ENCODE measurements at regions of chr1 and their contacts with region 1.

Region 1: DNA sequence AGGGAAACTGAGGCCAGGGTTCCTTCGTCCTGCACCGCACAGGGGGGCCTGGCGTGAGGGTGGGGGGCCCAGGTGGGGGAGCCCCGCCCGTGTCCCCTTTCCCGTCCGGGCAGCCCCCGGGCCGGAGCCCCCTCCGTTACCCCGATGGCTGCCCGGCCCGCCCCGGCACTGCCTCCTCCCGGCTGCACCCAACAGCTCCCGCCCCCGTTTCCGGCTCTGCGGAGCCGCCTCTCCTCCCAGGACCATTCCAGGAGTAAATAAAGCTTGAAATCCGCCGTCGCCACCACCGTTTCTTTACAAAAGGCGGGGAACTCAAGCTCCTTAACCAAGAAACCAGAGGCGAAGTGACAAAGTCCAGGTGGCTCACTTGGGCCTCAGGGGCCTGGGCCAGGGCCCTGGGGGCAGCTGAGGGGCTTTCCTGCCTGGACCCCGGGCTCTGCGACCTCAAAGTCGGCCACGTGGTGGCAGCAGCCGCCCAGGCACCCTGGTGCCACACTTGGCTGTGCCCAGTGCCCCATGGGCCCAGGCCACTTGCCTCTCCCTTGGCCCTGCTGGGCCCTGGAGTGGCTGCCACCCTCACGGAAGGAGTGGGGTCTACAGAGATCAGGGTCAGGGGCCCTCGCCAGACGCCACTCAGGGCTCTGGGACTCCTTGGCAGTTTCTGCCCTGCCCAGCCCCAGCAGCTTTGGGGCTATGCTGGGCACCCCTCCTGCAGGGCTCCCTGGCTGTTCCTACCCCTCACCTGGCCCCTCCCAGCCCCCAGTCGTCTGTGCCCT is 514 bp upstream of the FAAP20 start:
- DNase-seq: peak; percentile 93
- ATAC-seq: peak; percentile 75
- H3K4me3 ChIP-seq: peak overlapping the region; percentile 46 to 81 (median 63)
- H3K4me3 Mint-ChIP-seq: peak overlapping the region; percentile 93
- H3K27ac ChIP-seq: peak overlapping the region; percentile 80 to 84
- H3K27ac Mint-ChIP-seq: peak overlapping the region; percentile 96
- H3K4me1 ChIP-seq: peaks cover 26 to 41% of the 10 kb centered on the region in 2 donors
- H3K4me1 Mint-ChIP-seq: peaks cover 24% of the 10 kb centered on the region
- H3K27me3 ChIP-seq: no peaks in the 10 kb centered on the region
- H3K27me3 Mint-ChIP-seq: no peaks in the 10 kb centered on the region
- CTCF ChIP-seq: peak; percentile 90

Region 2: GRCh38 chr1:2049718-2050427 is 145.2 kb before region 1 on chr1 and contains the start of gene PRKCZ:
- CTCF ChIA-PET with region 1: no interaction called
- POLR2A ChIA-PET with region 1: no interaction called
- intact Hi-C with region 1: no loop called
- DNase-seq: peak; percentile 95
- ATAC-seq: peak; percentile 97
- H3K4me3 ChIP-seq: peak within 1 kb of the TSS; percentile 12 to 90 (median 79)
- H3K4me3 Mint-ChIP-seq: peak within 1 kb of the TSS; percentile 81
- H3K27ac ChIP-seq: peak within 1 kb of the TSS; percentile 52 to 72
- H3K27ac Mint-ChIP-seq: peak within 1 kb of the TSS; percentile 75
- H3K4me1 ChIP-seq: peaks cover 22 to 33% of the 10 kb centered on the region in 2 donors
- H3K4me1 Mint-ChIP-seq: peaks cover 34% of the 10 kb centered on the region
- H3K27me3 ChIP-seq: peaks cover 0 to 36% (median 15%) of the 10 kb centered on the region in 4 experiments
- H3K27me3 Mint-ChIP-seq: peaks cover 9% of the 10 kb centered on the region
- CTCF ChIP-seq: no peak
- total RNA-seq, gene PRKCZ: 53.2 and 54.4 TPM in 2 replicates

Region 3: DNA sequence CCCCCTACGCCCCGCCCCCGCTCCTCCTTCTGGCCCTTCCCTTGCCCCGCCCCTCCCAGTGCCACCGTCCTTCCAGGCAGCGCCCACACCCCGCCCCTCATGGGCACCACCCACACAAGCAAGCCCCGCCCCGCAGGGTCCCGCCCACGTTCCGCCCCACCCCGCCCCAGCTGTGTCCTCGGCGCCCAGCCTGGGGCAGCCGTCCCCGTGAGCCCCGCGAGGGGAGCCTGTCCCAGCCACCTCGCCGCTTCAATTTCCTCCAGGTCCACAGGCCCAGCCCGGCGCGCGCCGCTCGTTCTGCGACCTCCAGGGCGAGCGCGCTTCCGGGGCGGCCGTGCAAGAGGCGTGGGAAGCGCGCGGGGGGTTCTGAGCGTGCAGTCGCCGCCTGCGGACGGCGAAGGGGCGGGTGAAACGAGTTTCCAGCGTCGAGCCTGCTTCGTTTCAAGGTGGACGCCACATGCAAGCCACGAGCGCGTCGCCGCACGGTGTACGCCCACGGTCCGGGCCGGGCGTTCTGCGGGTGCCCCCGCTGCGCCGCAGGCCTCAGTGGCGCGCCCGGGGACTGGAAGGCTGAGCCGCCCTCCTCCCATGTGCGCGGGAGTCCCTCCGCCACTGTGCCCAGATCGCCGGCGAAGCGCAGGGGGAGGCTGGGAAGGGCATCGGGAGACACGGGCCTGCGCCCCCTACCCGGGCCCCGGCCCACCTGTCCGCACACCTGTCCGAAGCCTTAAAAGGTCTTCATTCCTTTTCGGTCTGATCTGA is 10.3 kb after region 1 on chr1:
- CTCF ChIA-PET with region 1: interaction called, 18 read pairs
- POLR2A ChIA-PET with region 1: interaction called, 4 read pairs
- intact Hi-C with region 1: loop called (anchors 1 kb)
- DNase-seq: peak; percentile 95
- ATAC-seq: peak; percentile 93
- H3K4me3 ChIP-seq: peak overlapping the region in 4 of 5 experiments; percentile 46 to 70 (median 64)
- H3K4me3 Mint-ChIP-seq: peak overlapping the region; percentile 77
- H3K27ac ChIP-seq: peak overlapping the region in 1 of 2 donors; percentile 47
- H3K27ac Mint-ChIP-seq: peak overlapping the region; percentile 72
- H3K4me1 ChIP-seq: peaks cover 32 to 44% of the 10 kb centered on the region in 2 donors
- H3K4me1 Mint-ChIP-seq: peaks cover 30% of the 10 kb centered on the region
- H3K27me3 ChIP-seq: no peaks in the 10 kb centered on the region
- H3K27me3 Mint-ChIP-seq: no peaks in the 10 kb centered on the region
- CTCF ChIP-seq: no peak

Region 4: GRCh38 chr1:2215909-2216766 is 21.1 kb after region 1 on chr1:
- CTCF ChIA-PET with region 1: no interaction called
- POLR2A ChIA-PET with region 1: no interaction called
- intact Hi-C with region 1: no loop called
- DNase-seq: no peak
- ATAC-seq: no peak
- H3K4me3 ChIP-seq: no peak overlapping the region
- H3K4me3 Mint-ChIP-seq: no peak overlapping the region
- H3K27ac ChIP-seq: no peak overlapping the region
- H3K27ac Mint-ChIP-seq: no peak overlapping the region
- H3K4me1 ChIP-seq: peaks cover 10 to 16% of the 10 kb centered on the region in 2 donors
- H3K4me1 Mint-ChIP-seq: peaks cover 7% of the 10 kb centered on the region
- H3K27me3 ChIP-seq: peaks cover 0 to 12% (median 3%) of the 10 kb centered on the region in 4 experiments
- H3K27me3 Mint-ChIP-seq: no peaks in the 10 kb centered on the region
- CTCF ChIP-seq: no peak

Region 5: GRCh38 chr1:2314803-2315673 is 120.0 kb after region 1 on chr1:
- CTCF ChIA-PET with region 1: interaction called, 19 read pairs
- POLR2A ChIA-PET with region 1: interaction called, 5 read pairs
- intact Hi-C with region 1: no loop called
- DNase-seq: peak; percentile 81
- ATAC-seq: peak; percentile 59
- H3K4me3 ChIP-seq: peak overlapping the region in 4 of 5 experiments; percentile 51 to 71 (median 59)
- H3K4me3 Mint-ChIP-seq: peak overlapping the region; percentile 69
- H3K27ac ChIP-seq: peak overlapping the region; percentile 84 to 91
- H3K27ac Mint-ChIP-seq: peak overlapping the region; percentile 77
- H3K4me1 ChIP-seq: peaks cover 44 to 53% of the 10 kb centered on the region in 2 donors
- H3K4me1 Mint-ChIP-seq: peaks cover 35% of the 10 kb centered on the region
- H3K27me3 ChIP-seq: no peaks in the 10 kb centered on the region
- H3K27me3 Mint-ChIP-seq: no peaks in the 10 kb centered on the region
- CTCF ChIP-seq: peak; percentile 95

Region 6: DNA sequence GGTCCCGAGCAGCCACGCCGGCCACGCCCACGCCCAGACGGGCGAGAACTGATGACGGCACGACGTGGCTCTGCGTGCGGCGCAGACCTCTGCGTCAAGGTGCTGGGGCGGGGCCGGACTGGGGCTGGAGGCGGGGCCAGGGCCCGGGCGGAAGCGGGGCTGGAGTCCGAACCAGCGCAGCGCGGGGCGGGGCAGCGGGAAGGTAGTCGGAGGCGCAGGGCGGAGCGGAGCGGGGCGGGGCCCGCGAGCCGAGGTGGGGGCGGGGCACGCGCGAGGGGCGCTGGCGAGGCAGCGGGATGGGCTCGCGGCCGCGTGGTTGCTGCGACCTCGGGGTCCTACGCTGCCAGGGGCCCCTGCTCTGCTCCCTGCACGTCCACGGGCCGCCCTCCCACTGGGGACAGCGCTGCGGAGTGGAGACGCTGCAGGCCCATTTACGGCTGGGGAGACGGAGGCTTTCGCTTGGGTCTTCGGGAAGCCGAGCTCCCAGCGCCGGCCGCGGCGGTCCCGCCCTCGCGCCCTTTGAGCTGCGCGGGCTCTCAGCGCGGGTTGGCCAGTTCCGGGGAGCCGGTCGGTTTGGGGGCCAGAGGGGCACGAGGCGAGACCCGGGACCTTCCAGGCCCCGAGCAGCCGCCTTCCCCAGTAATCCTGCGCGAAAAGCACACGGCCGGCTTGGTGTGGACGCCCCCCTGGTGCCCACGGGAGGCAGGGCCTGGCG is 217.6 kb after region 1 on chr1 and contains the start of gene PEX10:
- CTCF ChIA-PET with region 1: interaction called, 11 read pairs
- POLR2A ChIA-PET with region 1: interaction called, 4 read pairs
- intact Hi-C with region 1: loop called (anchors 1 kb)
- DNase-seq: peak; percentile 98
- ATAC-seq: peak; percentile 94
- H3K4me3 ChIP-seq: peak within 1 kb of the TSS; percentile 19 to 78 (median 69)
- H3K4me3 Mint-ChIP-seq: peak within 1 kb of the TSS; percentile 89
- H3K27ac ChIP-seq: peak within 1 kb of the TSS; percentile 52 to 90
- H3K27ac Mint-ChIP-seq: peak within 1 kb of the TSS; percentile 92
- H3K4me1 ChIP-seq: peaks cover 45 to 51% of the 10 kb centered on the region in 2 donors
- H3K4me1 Mint-ChIP-seq: peaks cover 43% of the 10 kb centered on the region
- H3K27me3 ChIP-seq: no peaks in the 10 kb centered on the region
- H3K27me3 Mint-ChIP-seq: no peaks in the 10 kb centered on the region
- CTCF ChIP-seq: no peak
- total RNA-seq, gene PEX10: 16.5 and 18.4 TPM in 2 replicates

Region 7: GRCh38 chr1:2586154-2587070 is 391.3 kb after region 1 on chr1 and contains the start of gene PRXL2B:
- CTCF ChIA-PET with region 1: interaction called, 17 read pairs
- POLR2A ChIA-PET with region 1: interaction called, 4 read pairs
- intact Hi-C with region 1: no loop called
- DNase-seq: peak; percentile 97
- ATAC-seq: peak; percentile 67
- H3K4me3 ChIP-seq: peak within 1 kb of the TSS; percentile 63 to 81 (median 77)
- H3K4me3 Mint-ChIP-seq: peak within 1 kb of the TSS; percentile 95
- H3K27ac ChIP-seq: peak within 1 kb of the TSS; percentile 98 to 99
- H3K27ac Mint-ChIP-seq: peak within 1 kb of the TSS; percentile 99
- H3K4me1 ChIP-seq: peaks cover 38 to 53% of the 10 kb centered on the region in 2 donors
- H3K4me1 Mint-ChIP-seq: peaks cover 43% of the 10 kb centered on the region
- H3K27me3 ChIP-seq: no peaks in the 10 kb centered on the region
- H3K27me3 Mint-ChIP-seq: no peaks in the 10 kb centered on the region
- CTCF ChIP-seq: no peak
- total RNA-seq, gene PRXL2B: 27.0 and 27.9 TPM in 2 replicates

Measured in B cell (primary cell).